ENCODE measurements at regions of chr5 and their contacts with region 1.

Region 1: GRCh38 chr5:99320436-99320835 is 391.6 kb upstream of the CHD1 start:
- DNase-seq: peak in 2 of 9 experiments; percentile 14 to 16
- ATAC-seq: no peak
- H3K4me3 ChIP-seq: no peak overlapping the region
- H3K4me3 Mint-ChIP-seq: no peak overlapping the region
- H3K27ac ChIP-seq: no peak overlapping the region
- H3K27ac Mint-ChIP-seq: no peak overlapping the region
- H3K4me1 ChIP-seq: no peaks in the 10 kb centered on the region
- H3K4me1 Mint-ChIP-seq: no peaks in the 10 kb centered on the region
- H3K27me3 ChIP-seq: no peaks in the 10 kb centered on the region
- H3K27me3 Mint-ChIP-seq: no peaks in the 10 kb centered on the region
- CTCF ChIP-seq: no peak

Region 2: DNA sequence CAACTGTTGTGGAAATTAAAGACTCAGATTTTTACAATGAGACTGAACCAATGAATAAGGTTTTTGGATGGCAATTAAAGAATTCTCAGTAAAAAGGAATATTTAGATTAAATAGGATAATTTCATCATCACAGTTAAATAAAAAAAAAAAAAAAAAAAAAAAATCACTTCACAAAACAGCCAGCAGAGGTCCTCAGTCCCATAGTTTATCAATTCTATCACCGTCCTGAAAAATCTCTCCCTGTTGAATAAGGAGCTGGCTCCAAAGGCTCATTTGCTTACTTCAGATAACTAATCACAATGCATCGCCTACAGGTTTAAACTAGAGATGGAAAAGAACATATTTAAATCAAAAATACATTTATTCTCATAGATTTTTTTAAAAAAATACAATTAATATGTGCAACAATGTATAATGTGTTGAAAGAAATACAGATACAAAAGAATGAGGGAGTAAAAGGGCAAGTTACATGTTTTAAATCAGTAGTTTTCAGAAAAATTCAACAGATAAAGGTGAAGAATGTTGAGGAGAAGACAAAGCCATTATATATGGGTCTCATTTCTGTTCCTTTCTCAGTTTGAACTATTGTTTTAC is 215.8 kb before region 1 on chr5:
- CTCF ChIA-PET with region 1: no interaction called
- POLR2A ChIA-PET with region 1: no interaction called
- intact Hi-C with region 1: loop called in 1 of 2 experiments (anchors 5 kb)
- DNase-seq: peak in 2 of 9 experiments; percentile 33 to 45
- ATAC-seq: no peak
- H3K4me3 ChIP-seq: no peak overlapping the region
- H3K4me3 Mint-ChIP-seq: no peak overlapping the region
- H3K27ac ChIP-seq: no peak overlapping the region
- H3K27ac Mint-ChIP-seq: no peak overlapping the region
- H3K4me1 ChIP-seq: no peaks in the 10 kb centered on the region
- H3K4me1 Mint-ChIP-seq: peaks cover 2% of the 10 kb centered on the region
- H3K27me3 ChIP-seq: no peaks in the 10 kb centered on the region
- H3K27me3 Mint-ChIP-seq: peaks cover 4% of the 10 kb centered on the region
- CTCF ChIP-seq: peak; percentile 86

Region 3: GRCh38 chr5:99355881-99356280 is 35.4 kb after region 1 on chr5:
- CTCF ChIA-PET with region 1: no interaction called
- POLR2A ChIA-PET with region 1: no interaction called
- intact Hi-C with region 1: no loop called
- DNase-seq: no peak
- ATAC-seq: no peak
- H3K4me3 ChIP-seq: no peak overlapping the region
- H3K4me3 Mint-ChIP-seq: no peak overlapping the region
- H3K27ac ChIP-seq: no peak overlapping the region
- H3K27ac Mint-ChIP-seq: no peak overlapping the region
- H3K4me1 ChIP-seq: no peaks in the 10 kb centered on the region
- H3K4me1 Mint-ChIP-seq: no peaks in the 10 kb centered on the region
- H3K27me3 ChIP-seq: no peaks in the 10 kb centered on the region
- H3K27me3 Mint-ChIP-seq: no peaks in the 10 kb centered on the region
- CTCF ChIP-seq: no peak